Naive thymus-derived CD4-positive, alpha-beta T cell (primary cell): ENCODE measurements at regions of chr17 and their contacts with region 1.

Region 1: GRCh38 chr17:17313350-17313991 is 10.3 kb downstream of the NT5M start:
- DNase-seq: peak; percentile 49 to 80 (median 76)
- ATAC-seq: peak; percentile 96
- H3K4me3 ChIP-seq: no peak overlapping the region
- H3K4me3 Mint-ChIP-seq: no peak overlapping the region
- H3K27ac ChIP-seq: no peak overlapping the region
- H3K27ac Mint-ChIP-seq: peak overlapping the region in 2 of 9 donors; percentile 28 to 43
- H3K4me1 ChIP-seq: no peaks in the 10 kb centered on the region
- H3K4me1 Mint-ChIP-seq: peaks cover 0 to 7% (median 5%) of the 10 kb centered on the region in 7 donors
- H3K27me3 ChIP-seq: no peaks in the 10 kb centered on the region
- H3K27me3 Mint-ChIP-seq: no peaks in the 10 kb centered on the region

Region 2: DNA sequence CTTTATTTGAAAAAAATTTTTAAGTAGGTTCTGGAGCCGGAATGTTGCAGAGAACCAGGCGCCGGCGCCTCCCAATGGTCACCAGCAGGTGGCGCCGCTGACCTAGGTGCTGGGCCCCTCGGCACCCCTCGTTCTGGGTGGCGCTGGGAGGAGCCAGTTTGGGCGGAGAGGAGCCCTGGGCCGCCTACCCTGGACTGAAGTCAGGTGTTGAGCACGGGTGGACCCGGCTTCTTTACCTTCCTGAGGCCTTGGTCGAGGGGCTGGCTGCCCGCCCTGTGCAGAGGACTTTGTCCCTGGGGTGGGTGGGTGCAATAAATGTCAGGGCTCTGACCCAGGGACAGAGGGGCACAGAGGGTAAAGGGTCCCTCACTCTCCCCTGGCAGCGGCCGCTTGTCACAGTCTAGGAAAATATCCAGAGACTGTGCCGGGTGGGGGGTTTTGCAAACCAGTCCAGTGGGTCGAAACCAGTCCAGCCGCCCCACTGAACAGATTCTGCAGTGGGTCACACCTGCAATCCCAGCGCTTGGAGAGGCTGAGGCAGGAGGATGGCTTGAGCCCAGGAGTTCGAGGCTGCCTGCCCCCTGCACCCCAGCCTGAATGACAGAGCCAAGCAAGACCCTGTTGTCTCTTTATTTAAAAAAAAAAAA is 311.5 kb before region 1 on chr17:
- CTCF ChIA-PET with region 1: interaction called, 10 read pairs
- POLR2A ChIA-PET with region 1: no interaction called
- intact Hi-C with region 1: loop called (anchors 1 kb)
- DNase-seq: peak; percentile 46 to 81 (median 74)
- ATAC-seq: peak; percentile 85
- H3K4me3 ChIP-seq: no peak overlapping the region
- H3K4me3 Mint-ChIP-seq: no peak overlapping the region
- H3K27ac ChIP-seq: no peak overlapping the region
- H3K27ac Mint-ChIP-seq: no peak overlapping the region
- H3K4me1 ChIP-seq: peaks cover 3 to 4% of the 10 kb centered on the region in 2 donors
- H3K4me1 Mint-ChIP-seq: peaks cover 0 to 5% (median 0%) of the 10 kb centered on the region in 7 donors
- H3K27me3 ChIP-seq: no peaks in the 10 kb centered on the region
- H3K27me3 Mint-ChIP-seq: peaks cover 0 to 7% (median 0%) of the 10 kb centered on the region in 5 donors

Region 3: GRCh38 chr17:17114592-17115225 is 198.8 kb before region 1 on chr17:
- CTCF ChIA-PET with region 1: no interaction called
- POLR2A ChIA-PET with region 1: no interaction called
- intact Hi-C with region 1: no loop called
- DNase-seq: no peak
- ATAC-seq: no peak
- H3K4me3 ChIP-seq: no peak overlapping the region
- H3K4me3 Mint-ChIP-seq: peak overlapping the region in 3 of 10 donors; percentile 18 to 38 (median 29)
- H3K27ac ChIP-seq: no peak overlapping the region
- H3K27ac Mint-ChIP-seq: peak overlapping the region in 7 of 9 donors; percentile 38 to 88 (median 57)
- H3K4me1 ChIP-seq: peaks cover 39 to 48% of the 10 kb centered on the region in 2 donors
- H3K4me1 Mint-ChIP-seq: peaks cover 55 to 88% (median 80%) of the 10 kb centered on the region in 7 donors
- H3K27me3 ChIP-seq: no peaks in the 10 kb centered on the region
- H3K27me3 Mint-ChIP-seq: no peaks in the 10 kb centered on the region

Region 4: GRCh38 chr17:17141860-17142552 is 171.5 kb before region 1 on chr17:
- CTCF ChIA-PET with region 1: interaction called, 22 read pairs
- POLR2A ChIA-PET with region 1: no interaction called
- intact Hi-C with region 1: loop called (anchors 1 kb)
- DNase-seq: peak; percentile 35 to 64 (median 54)
- ATAC-seq: peak; percentile 74
- H3K4me3 ChIP-seq: no peak overlapping the region
- H3K4me3 Mint-ChIP-seq: peak overlapping the region in 2 of 10 donors; percentile 2 to 3
- H3K27ac ChIP-seq: no peak overlapping the region
- H3K27ac Mint-ChIP-seq: peak overlapping the region in 7 of 9 donors; percentile 5 to 85 (median 63)
- H3K4me1 ChIP-seq: peaks cover 0 to 2% of the 10 kb centered on the region in 2 donors
- H3K4me1 Mint-ChIP-seq: peaks cover 8 to 24% (median 9%) of the 10 kb centered on the region in 7 donors
- H3K27me3 ChIP-seq: no peaks in the 10 kb centered on the region
- H3K27me3 Mint-ChIP-seq: no peaks in the 10 kb centered on the region

Region 5: GRCh38 chr17:17151962-17152361 is 161.5 kb before region 1 on chr17:
- CTCF ChIA-PET with region 1: interaction called, 3 read pairs
- POLR2A ChIA-PET with region 1: no interaction called
- intact Hi-C with region 1: loop called in 1 of 2 experiments (anchors 1 kb)
- DNase-seq: no peak
- ATAC-seq: peak; percentile 66
- H3K4me3 ChIP-seq: no peak overlapping the region
- H3K4me3 Mint-ChIP-seq: peak overlapping the region in 3 of 10 donors; percentile 15 to 52 (median 27)
- H3K27ac ChIP-seq: no peak overlapping the region
- H3K27ac Mint-ChIP-seq: peak overlapping the region in 3 of 9 donors; percentile 28 to 78 (median 77)
- H3K4me1 ChIP-seq: peaks cover 13 to 40% of the 10 kb centered on the region in 2 donors
- H3K4me1 Mint-ChIP-seq: peaks cover 32 to 49% (median 41%) of the 10 kb centered on the region in 7 donors
- H3K27me3 ChIP-seq: no peaks in the 10 kb centered on the region
- H3K27me3 Mint-ChIP-seq: no peaks in the 10 kb centered on the region

Region 6: GRCh38 chr17:17269926-17270773 is 43.3 kb before region 1 on chr17:
- CTCF ChIA-PET with region 1: interaction called, 3 read pairs
- POLR2A ChIA-PET with region 1: no interaction called
- intact Hi-C with region 1: loop called (anchors 1 to 5 kb)
- DNase-seq: peak in 2 of 9 donors; percentile 10 to 13
- ATAC-seq: no peak
- H3K4me3 ChIP-seq: no peak overlapping the region
- H3K4me3 Mint-ChIP-seq: no peak overlapping the region
- H3K27ac ChIP-seq: no peak overlapping the region
- H3K27ac Mint-ChIP-seq: no peak overlapping the region
- H3K4me1 ChIP-seq: no peaks in the 10 kb centered on the region
- H3K4me1 Mint-ChIP-seq: peaks cover 0 to 12% (median 6%) of the 10 kb centered on the region in 7 donors
- H3K27me3 ChIP-seq: no peaks in the 10 kb centered on the region
- H3K27me3 Mint-ChIP-seq: no peaks in the 10 kb centered on the region

Region 7: DNA sequence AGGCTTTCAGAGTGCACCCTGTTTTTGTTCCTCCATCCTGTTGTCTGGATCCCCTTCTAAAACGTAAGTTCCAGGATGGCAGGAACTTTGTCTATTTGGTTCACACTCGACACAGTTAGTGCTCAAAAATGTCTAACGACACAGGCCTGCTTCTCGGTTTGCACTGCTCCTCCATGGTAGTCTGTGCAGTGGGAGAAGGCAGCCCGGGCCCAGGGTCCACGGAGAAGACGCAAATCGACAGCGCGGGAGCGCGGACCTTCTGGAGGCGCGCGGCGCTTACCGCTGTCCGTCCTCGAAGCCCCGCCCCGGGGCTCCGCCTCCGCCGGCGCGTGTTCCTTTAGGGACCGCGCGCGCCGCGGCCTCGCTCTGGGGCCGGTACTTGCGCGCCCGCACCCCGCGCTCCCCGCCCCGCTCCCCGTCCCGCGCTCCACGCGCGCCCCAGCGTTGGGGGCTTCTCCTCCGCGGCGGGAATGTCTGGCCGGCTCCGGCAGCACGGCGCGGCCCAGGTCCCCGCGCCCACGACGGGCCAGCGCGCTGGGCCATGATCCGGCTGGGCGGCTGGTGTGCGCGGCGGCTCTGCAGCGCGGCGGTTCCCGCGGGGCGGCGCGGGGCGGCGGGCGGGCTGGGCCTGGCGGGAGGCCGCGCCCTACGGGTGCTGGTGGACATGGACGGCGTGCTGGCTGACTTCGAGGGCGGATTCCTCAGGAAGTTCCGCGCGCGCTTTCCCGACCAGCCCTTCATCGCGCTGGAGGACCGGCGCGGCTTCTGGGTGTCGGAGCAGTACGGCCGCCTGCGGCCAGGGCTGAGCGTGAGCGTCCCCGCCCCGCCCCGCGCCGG is 10.2 kb before region 1 on chr17 and contains the start of gene NT5M:
- CTCF ChIA-PET with region 1: interaction called, 5 read pairs
- POLR2A ChIA-PET with region 1: interaction called, 4 read pairs
- intact Hi-C with region 1: loop called in 1 of 2 experiments (anchors 1 kb)
- DNase-seq: peak; percentile 33 to 84 (median 56)
- ATAC-seq: peak; percentile 77
- H3K4me3 ChIP-seq: peak within 1 kb of the TSS; percentile 58
- H3K4me3 Mint-ChIP-seq: peak within 1 kb of the TSS; percentile 82 to 96 (median 90)
- H3K27ac ChIP-seq: peak within 1 kb of the TSS; percentile 67
- H3K27ac Mint-ChIP-seq: peak within 1 kb of the TSS; percentile 53 to 93 (median 84)
- H3K4me1 ChIP-seq: peaks cover 12 to 33% of the 10 kb centered on the region in 2 donors
- H3K4me1 Mint-ChIP-seq: peaks cover 16 to 49% (median 37%) of the 10 kb centered on the region in 7 donors
- H3K27me3 ChIP-seq: no peaks in the 10 kb centered on the region
- H3K27me3 Mint-ChIP-seq: no peaks in the 10 kb centered on the region
- total RNA-seq, gene NT5M: 2.9 to 6.3 (median 3.5) TPM

Region 8: DNA sequence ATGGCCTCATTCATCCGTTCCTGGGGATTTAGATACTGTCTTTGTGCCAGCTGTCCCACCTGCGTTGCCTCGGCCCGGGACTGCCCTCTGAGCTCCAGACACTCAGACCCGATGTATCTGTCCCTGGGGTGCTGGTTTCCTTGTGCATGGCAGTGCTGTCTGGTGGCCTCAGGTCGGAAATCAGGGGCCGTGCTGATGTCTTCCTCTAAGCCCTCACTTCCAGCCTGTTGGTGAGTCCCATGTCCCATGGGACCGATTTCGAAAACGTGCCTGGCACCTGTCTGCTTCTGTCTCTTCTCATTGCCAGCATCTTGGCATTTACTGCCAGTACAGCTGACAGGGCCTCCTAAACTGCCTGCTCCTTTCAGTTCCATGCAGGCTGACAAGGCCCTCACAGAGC is 11.8 kb after region 1 on chr17:
- CTCF ChIA-PET with region 1: no interaction called
- POLR2A ChIA-PET with region 1: no interaction called
- intact Hi-C with region 1: no loop called
- DNase-seq: no peak
- ATAC-seq: no peak
- H3K4me3 ChIP-seq: no peak overlapping the region
- H3K4me3 Mint-ChIP-seq: no peak overlapping the region
- H3K27ac ChIP-seq: no peak overlapping the region
- H3K27ac Mint-ChIP-seq: no peak overlapping the region
- H3K4me1 ChIP-seq: no peaks in the 10 kb centered on the region
- H3K4me1 Mint-ChIP-seq: no peaks in the 10 kb centered on the region
- H3K27me3 ChIP-seq: no peaks in the 10 kb centered on the region
- H3K27me3 Mint-ChIP-seq: no peaks in the 10 kb centered on the region

Region 9: DNA sequence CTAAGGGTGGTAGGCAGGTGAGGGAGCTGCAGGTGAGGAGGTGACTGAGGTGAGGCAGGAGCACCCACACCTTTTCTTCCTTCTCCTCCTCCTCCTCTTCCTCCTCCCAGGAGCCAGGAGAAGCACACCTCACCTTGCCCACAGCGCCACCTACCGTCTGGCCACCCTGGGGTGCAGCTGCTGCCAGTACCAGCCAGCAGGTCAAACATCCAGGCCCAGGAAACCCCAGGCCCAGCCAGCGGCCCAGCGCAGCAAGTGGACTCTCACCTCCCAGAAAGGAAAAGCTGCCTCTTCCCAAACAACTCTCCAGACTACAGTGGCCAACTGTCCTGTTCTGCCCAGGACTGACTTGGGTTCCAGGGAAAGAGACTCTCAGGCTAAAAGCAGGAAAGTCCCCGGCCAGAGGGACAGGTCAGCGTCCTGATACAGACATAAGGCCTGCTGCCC is 255.3 kb after region 1 on chr17:
- CTCF ChIA-PET with region 1: no interaction called
- POLR2A ChIA-PET with region 1: no interaction called
- intact Hi-C with region 1: no loop called
- DNase-seq: peak in 7 of 9 donors; percentile 15 to 73 (median 29)
- ATAC-seq: no peak
- H3K4me3 ChIP-seq: no peak overlapping the region
- H3K4me3 Mint-ChIP-seq: no peak overlapping the region
- H3K27ac ChIP-seq: no peak overlapping the region
- H3K27ac Mint-ChIP-seq: peak overlapping the region in 1 of 9 donors; percentile 19
- H3K4me1 ChIP-seq: no peaks in the 10 kb centered on the region
- H3K4me1 Mint-ChIP-seq: peaks cover 0 to 7% (median 0%) of the 10 kb centered on the region in 7 donors
- H3K27me3 ChIP-seq: no peaks in the 10 kb centered on the region
- H3K27me3 Mint-ChIP-seq: no peaks in the 10 kb centered on the region